Activated CD4-positive, alpha-beta T cell treated with anti-CD3 and anti-CD28 coated beads for 36 hours (primary cell): ENCODE measurements at regions of chr12 and their contacts with region 1.

Region 1: DNA sequence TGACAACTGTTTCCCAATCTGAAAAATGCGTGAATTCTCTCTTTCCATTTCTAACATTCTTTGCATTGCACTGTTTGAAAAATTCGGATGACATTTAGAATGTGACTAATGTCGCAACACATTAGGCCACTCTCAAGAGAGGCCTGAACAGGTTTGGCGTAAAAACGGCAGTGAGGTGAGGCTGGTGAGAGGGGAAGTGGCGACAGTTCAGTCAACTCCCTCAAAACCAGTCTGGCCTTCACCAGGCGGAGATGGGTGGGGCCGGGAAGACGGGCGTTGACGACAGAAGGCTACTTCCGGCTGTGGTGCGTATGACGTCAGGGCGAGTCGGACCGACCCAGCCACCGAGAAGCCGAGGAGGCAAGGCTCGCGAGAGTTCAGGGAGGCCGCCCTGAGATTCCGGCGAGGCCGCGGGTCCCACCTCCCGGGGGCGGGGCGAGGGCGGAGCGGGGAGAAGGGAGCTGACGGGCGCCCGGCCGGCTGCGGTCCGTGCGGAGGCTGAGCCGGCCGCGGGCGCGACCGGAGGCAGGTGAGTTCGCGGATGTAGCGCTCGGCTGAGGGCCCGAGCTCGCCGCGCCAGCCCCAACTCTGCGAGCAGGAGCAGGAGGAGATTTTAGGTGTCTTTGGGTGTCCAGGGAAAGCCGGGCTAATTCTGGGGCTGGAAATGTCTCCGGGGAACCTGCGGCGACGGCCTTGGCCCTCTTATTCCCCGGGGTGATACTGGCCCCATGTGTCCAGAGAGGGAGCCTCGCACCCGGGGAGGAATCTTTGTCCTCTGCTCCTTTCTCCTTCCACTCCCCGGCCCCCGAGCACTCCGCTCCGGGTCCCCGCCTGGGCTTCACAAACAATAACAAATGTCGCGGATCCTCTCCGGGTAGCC is at the start of gene STK38L:
- DNase-seq: peak; percentile 99
- ATAC-seq: peak; percentile 96
- H3K4me3 Mint-ChIP-seq: peak within 1 kb of the TSS; percentile 95
- H3K27ac Mint-ChIP-seq: peak within 1 kb of the TSS; percentile 98
- H3K4me1 Mint-ChIP-seq: peaks cover 48% of the 10 kb centered on the region
- H3K27me3 Mint-ChIP-seq: no peaks in the 10 kb centered on the region
- total RNA-seq, gene STK38L: 24.9 to 30.4 TPM

Region 2: DNA sequence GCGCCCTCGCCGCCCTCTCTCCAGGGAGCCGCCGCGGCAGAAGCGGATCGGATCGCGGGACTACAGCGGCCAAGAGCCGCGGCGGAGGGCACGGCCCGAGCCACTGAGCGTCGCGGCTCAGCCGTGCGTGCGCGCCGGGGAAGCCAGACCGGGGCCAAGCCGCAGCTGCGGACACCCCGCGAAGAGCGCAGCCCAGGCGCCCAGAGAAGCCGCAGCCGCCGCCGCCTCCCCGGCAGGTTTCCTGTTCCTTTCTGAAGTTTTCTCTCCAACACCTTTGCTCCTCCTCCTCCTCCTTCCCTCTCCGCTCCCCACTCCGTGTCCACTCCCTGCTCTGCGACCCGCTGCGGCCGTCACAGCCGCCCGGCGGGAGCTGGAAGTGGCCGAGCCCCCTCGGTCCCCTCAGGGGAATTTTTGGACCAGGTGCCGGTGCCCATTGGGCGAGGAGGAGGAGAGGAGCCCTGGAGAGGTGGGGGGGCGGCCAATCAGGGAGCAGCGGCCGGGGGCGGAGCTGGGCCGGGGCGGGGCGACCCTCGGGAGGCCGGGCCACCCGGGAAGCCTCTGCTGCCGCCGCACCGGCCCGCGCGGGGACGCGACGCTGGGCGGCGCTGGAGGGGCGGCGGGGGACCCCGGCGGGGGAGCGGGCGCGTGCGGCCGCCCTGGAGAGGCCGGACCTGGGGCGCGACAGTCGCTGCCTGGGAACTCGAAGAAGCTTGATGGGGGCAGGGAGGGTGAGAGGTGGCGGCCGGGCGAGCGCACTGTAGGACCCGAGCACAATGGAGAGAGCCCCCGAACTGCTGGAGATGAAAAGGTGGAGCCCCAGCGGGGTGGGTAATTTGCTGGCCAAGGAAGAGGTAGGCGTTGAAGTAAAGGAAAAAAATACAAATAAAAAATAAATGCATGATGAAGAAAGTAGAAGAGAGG is 411.0 kb before region 1 on chr12 and contains the start of gene ITPR2:
- CTCF ChIA-PET with region 1: no interaction called
- POLR2A ChIA-PET with region 1: no interaction called
- intact Hi-C with region 1: loop called in 1 of 2 experiments (anchors 2 kb)
- DNase-seq: peak; percentile 97
- ATAC-seq: peak; percentile 91
- H3K4me3 Mint-ChIP-seq: peak within 1 kb of the TSS; percentile 96
- H3K27ac Mint-ChIP-seq: peak within 1 kb of the TSS; percentile 99
- H3K4me1 Mint-ChIP-seq: peaks cover 37% of the 10 kb centered on the region
- H3K27me3 Mint-ChIP-seq: no peaks in the 10 kb centered on the region
- total RNA-seq, gene ITPR2: 27.3 to 28.6 TPM

Region 3: GRCh38 chr12:27142101-27142721 is 101.8 kb before region 1 on chr12:
- CTCF ChIA-PET with region 1: no interaction called
- POLR2A ChIA-PET with region 1: no interaction called
- intact Hi-C with region 1: loop called in 1 of 2 experiments (anchors 5 kb)
- DNase-seq: peak; percentile 63
- ATAC-seq: peak; percentile 70
- H3K4me3 Mint-ChIP-seq: no peak overlapping the region
- H3K27ac Mint-ChIP-seq: no peak overlapping the region
- H3K4me1 Mint-ChIP-seq: peaks cover 12% of the 10 kb centered on the region
- H3K27me3 Mint-ChIP-seq: no peaks in the 10 kb centered on the region

Region 4: DNA sequence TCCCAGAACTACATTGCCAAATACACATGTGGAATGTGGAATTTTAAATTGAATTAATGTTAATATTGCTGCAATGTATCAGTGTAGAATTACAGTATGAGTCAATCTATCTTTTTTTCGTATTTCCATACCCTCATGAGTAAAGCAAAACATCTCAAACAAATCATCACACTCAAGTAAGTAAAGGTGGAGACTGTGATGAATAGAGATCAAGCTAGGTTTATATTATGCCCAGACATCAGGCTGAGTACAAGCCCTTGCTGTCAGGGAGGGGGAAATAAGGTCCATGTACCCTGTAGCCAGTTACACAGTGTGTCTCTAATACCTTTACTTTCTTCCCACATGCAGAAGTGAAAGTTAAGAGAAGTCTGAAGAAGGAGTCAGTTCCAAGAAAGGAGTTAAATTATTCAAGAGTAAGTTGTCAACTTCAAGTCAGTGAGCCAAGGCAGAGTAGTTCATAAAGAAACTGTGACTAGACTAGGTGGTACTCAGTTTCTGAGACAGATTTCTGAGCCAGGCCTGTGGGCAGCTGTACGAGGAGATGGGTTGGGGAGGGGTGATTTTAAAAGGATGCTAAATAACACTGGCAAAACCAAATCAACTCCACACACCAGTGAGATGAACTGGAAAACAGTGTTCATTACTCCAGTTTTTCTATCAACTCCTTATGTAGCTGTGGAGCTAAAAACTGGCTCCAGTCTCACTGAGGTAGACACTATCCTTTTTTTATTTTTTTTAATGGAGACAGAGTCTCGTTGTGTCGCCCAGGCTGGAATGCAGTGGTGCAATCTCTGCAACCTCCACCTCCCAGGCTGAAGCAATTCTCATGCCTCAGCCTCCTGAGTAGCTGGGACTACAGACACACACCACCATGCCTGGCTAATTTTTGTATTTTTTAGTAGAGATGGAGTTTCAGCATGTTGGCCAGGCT is 23.7 kb before region 1 on chr12:
- CTCF ChIA-PET with region 1: interaction called, 3 read pairs
- POLR2A ChIA-PET with region 1: interaction called, 3 read pairs
- intact Hi-C with region 1: loop called in 1 of 2 experiments (anchors 2 kb)
- DNase-seq: peak; percentile 46
- ATAC-seq: peak; percentile 93
- H3K4me3 Mint-ChIP-seq: no peak overlapping the region
- H3K27ac Mint-ChIP-seq: peak overlapping the region; percentile 84
- H3K4me1 Mint-ChIP-seq: peaks cover 20% of the 10 kb centered on the region
- H3K27me3 Mint-ChIP-seq: peaks cover 4% of the 10 kb centered on the region

Region 5: GRCh38 chr12:27319409-27319808 is 75.4 kb after region 1 on chr12:
- CTCF ChIA-PET with region 1: no interaction called
- POLR2A ChIA-PET with region 1: no interaction called
- intact Hi-C with region 1: no loop called
- DNase-seq: no peak
- ATAC-seq: no peak
- H3K4me3 Mint-ChIP-seq: no peak overlapping the region
- H3K27ac Mint-ChIP-seq: no peak overlapping the region
- H3K4me1 Mint-ChIP-seq: no peaks in the 10 kb centered on the region
- H3K27me3 Mint-ChIP-seq: no peaks in the 10 kb centered on the region

Region 6: DNA sequence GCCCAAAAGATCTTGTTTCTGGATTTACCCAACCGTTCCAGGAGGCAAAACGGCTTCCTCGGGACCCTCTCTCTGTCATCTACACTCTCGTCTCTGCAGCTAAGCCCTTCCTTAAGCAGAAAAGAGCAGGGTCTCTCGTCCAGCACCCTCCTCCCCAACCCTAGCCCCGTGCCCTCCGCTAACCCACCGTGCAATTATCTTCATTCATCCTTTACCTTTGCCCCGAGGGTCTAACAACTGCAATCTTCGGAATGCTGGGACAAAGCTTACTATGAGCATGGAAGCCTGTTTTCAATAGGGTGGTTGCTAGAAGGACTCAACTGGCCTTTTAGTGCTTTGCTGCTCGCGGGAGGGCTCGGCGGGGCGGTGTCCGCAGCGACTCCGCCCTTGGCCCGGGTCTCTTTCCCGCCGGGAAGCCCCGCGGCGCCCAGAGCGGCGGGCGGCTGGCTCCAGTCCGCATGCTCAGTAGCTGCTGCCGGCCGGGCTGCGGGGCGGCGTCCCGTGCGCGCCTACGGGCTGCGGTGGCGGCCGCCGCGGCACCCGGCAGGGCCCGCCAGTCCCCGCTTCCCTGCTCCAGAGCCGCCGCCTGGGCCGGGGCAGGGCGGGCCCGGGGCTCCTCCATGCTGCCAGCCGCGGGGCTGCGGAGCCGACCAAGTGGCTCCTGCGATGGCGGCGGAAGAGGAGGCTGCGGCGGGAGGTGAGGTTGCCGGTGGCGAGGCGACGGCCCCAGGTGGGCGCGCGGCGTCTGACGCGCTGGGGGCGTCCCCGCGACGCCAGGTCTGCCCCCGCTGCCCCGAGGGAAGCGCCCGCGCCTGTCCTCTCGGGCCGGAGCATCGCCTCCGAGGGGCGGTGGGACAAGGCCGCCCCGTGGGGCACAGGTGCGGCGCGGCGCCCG is 88.6 kb after region 1 on chr12 and contains the start of gene BMAL2:
- CTCF ChIA-PET with region 1: no interaction called
- POLR2A ChIA-PET with region 1: no interaction called
- intact Hi-C with region 1: loop called (anchors 2 kb)
- DNase-seq: peak; percentile 66
- ATAC-seq: peak; percentile 28
- H3K4me3 Mint-ChIP-seq: peak within 1 kb of the TSS; percentile 82
- H3K27ac Mint-ChIP-seq: peak within 1 kb of the TSS; percentile 90
- H3K4me1 Mint-ChIP-seq: peaks cover 42% of the 10 kb centered on the region
- H3K27me3 Mint-ChIP-seq: peaks cover 30% of the 10 kb centered on the region
- total RNA-seq, gene BMAL2: 10.9 to 13.2 TPM